ENCODE measurements at regions of chr5 and their contacts with region 1.

Region 1: DNA sequence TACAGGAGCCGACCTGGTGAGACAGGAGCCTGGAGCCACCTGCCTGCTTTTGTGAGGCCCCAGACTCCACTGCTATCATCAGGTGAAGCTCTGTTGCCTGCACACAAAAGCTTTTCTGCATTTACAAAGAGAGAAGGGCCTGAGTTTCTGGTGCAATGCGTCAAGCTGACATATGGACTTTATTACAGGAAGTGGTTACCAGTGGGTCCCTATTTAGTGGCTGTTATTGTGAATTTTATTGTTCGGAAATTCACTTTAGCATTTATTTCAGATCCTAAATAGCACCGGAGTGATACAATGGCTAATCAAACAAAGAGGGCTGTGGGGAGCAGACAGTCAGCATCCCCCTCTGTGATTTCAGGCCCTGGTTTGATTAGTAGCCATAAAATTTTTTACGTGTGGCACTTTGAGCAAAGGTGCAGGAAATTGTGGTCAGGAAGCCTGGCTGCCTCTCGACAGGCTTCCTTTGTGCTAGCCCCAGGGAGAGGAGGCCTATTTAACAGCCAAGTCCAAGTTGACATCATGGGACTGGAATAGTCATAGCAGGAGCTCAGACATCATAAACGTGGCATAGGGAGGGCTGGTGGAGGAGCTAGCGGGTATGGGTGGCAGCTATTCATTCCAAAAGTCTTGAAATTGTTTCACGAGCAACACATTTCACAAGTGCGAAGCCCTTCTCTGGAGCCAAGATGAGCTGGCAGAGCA is 8.4 kb downstream of the TGFBI start:
- DNase-seq: peak in 3 of 5 donors; percentile 43 to 62 (median 59)
- ATAC-seq: peak; percentile 86 to 94 (median 88)
- H3K4me3 ChIP-seq: no peak overlapping the region
- H3K27ac ChIP-seq: peak overlapping the region; percentile 55 to 84 (median 70)
- H3K4me1 ChIP-seq: peaks cover 3 to 78% (median 45%) of the 10 kb centered on the region in 12 donors
- H3K27me3 ChIP-seq: no peaks in the 10 kb centered on the region
- CTCF ChIP-seq: no peak
- POLR2A ChIP-seq: no peak

Region 2: DNA sequence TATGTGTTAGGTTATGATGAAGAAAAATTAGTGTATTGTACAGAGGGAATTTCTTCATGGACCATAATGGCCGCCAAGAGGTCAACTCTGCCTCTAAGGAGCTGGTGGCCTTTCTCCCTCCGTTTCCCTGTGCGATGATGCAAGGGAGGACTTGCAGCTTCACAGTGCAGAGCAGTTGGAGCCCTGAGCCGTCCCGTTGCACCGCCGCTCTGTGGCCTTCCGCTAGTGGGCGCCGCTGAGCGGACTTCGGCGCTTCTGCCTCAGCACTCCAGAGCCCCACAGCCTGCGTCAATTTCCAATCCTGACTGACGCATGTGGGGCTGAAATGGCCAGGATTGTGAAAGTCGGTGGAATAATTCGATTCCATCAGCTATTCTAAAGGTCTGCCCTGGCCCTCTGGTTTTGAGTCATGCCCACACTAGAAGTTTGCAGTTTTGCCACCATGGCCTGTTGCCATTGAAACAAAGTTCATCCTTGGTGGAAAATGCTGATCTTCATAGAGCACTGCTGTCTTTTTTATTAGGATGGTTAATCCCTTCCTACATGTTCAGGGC is 59.7 kb before region 1 on chr5:
- intact Hi-C with region 1: loop called in 2 of 10 experiments (anchors 5 kb)
- DNase-seq: peak; percentile 54 to 88 (median 71)
- ATAC-seq: peak; percentile 60 to 94 (median 79)
- H3K4me3 ChIP-seq: no peak overlapping the region
- H3K27ac ChIP-seq: peak overlapping the region in 1 of 12 donors; percentile 5
- H3K4me1 ChIP-seq: peaks cover 0 to 44% (median 22%) of the 10 kb centered on the region in 12 donors
- H3K27me3 ChIP-seq: no peaks in the 10 kb centered on the region
- CTCF ChIP-seq: peak; percentile 36 to 66 (median 52)
- POLR2A ChIP-seq: no peak

Measured in heart left ventricle (tissue), 16 donors.